ENCODE measurements at regions of chr14 and their contacts with region 1.

Region 1: DNA sequence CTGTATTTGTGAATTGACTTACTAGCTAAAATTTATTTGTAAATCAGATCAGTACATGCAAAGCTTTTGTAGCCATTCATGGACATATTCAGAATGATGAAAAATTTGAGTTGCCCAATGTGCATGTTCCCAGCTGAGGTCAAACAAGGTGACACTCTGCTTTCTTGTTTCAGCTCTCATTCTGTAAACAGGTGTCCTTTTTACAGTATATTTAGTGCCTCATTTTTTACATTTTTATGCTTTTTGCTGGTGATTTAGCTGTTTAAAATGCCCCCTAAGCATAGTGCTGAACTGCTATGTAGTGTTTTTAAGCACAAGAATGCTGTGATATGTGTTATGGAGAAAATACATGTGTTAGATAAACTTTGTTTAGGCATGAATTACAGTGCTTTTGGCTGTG is 76.3 kb downstream of the MIA2 start:
- DNase-seq: no peak
- H3K4me3 ChIP-seq: no peak overlapping the region
- CTCF ChIP-seq: no peak

Region 2: DNA sequence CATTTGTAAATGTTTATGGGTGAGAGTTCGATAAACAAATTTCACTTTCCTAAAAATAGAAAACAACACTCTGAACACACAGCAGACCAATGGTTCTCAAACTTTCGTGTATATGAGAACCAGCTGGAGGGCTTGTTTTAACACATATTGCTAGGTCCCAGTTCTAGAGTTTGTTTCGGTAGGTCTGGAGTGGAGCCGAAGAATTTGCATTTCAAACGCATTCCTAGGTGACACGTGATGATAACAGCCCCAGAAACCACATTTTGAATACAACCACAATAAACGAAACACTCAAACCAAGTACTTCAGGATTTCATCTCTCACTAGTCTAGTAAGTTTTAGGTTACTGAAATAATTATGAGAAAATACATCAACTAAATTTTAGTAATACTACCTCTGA is 224.1 kb before region 1 on chr14:
- in situ Hi-C with region 1: no loop called
- DNase-seq: peak; percentile 55
- H3K4me3 ChIP-seq: no peak overlapping the region
- CTCF ChIP-seq: no peak

Region 3: DNA sequence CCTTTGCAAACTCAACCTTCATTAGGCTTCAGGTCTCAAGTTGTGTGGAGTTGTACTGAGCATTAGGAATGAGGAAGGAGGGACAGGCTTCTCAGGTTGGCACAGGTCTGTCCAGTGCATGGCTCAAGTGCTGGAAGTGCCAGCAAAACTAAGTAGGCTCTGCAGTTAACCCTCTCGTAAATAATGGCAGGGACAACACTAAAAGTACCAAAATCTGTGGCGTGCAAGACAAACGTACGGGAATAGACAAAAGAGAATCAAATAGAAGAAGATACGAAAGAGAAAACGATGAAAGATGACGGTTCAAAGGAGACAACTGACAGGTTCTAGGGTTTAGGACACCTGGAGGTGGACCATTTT is 140.5 kb before region 1 on chr14:
- in situ Hi-C with region 1: loop called (anchors 5 kb)
- DNase-seq: no peak
- H3K4me3 ChIP-seq: peak overlapping the region; percentile 71
- CTCF ChIP-seq: no peak

Region 4: DNA sequence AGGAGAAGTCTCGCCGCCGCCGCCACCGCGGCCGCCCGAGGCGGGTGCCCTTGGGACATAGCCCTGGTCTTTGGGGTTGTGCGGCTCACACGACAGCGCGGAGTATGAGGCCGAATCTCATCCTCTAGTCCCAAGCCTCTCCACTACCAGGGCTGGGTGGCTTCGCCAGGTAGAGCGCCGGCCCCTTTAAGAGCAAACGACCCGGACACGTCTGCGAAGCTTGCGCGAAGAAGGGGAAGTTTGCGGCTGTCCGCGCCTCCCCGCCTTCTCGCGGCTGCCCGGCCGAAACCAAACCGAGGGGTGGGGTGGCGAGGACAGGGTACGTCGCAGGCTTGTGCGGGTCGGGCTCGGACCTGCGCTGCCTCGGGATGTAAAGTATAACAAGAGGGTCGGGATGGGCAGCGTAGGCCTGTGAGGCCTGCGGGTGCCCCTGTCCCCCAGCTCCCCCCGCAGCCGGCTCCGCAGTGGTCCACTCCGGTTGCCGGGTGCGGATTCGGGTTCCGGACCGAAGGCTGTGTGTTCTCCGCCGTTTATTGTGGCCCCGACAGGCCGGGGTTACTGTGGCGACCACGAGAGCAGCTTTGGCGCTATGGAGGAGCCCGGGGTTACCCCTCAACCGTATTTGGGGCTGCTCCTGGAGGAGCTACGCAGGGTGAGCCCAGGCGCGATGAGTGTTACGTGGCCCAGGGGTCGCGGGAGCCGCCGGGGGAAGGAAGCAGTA is 43.0 kb before region 1 on chr14:
- in situ Hi-C with region 1: no loop called
- DNase-seq: peak; percentile 50
- H3K4me3 ChIP-seq: peak overlapping the region; percentile 63
- CTCF ChIP-seq: no peak

Measured in astrocyte of the cerebellum (primary cell).